OCI-LY7 (cell line): ENCODE measurements at regions of chr15 and their contacts with region 1.

Region 1: DNA sequence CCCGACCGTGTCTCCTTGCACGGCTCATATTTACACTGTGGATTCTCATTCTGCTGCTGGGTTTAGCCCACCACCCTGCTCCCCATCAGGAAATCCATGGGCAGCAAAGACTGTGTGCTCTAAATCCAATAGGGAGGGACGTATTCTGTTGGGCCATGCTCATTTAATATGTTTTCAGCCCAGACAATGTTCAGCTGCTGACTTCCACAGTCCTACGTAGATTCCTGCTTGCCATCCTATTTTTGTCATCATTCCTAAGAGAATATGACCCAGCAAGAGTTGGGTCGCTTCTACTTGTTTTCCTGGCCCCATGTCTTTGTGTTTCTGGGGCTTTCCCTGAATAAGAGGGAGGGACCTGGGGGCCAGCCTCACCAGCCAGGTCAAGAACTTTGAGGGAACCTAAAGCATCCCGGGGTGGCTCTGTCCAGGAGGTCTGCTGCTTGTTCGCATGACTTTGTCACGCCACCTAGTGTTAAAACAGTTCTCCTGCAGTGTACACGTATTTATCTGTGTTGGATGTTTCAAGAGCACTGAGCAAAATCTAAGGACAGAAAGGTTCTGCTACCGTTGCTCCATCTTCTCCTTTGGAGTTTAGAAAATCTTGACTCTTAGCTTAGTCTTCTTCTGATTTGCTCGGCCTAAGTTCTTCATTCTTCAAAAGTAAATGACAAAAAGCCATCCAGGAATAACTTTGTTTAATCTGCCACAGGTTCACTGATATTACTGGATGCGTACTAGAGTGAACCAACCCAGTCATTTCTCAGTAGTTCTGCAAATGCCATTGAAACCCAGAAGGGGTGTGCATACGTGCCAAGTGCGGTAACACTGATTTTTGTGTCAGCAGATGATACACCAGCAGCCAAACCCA is 79.8 kb upstream of the NR2E3 start:
- DNase-seq: peak; percentile 61
- H3K4me3 ChIP-seq: no peak overlapping the region
- H3K27ac ChIP-seq: no peak overlapping the region
- H3K4me1 ChIP-seq: no peaks in the 10 kb centered on the region
- CTCF ChIP-seq: peak; percentile 87

Region 2: GRCh38 chr15:71651750-71652186 is 78.7 kb before region 1 on chr15:
- CTCF ChIA-PET with region 1: no interaction called
- POLR2A ChIA-PET with region 1: no interaction called
- intact Hi-C with region 1: loop called (anchors 1 kb)
- DNase-seq: peak; percentile 45
- H3K4me3 ChIP-seq: no peak overlapping the region
- H3K27ac ChIP-seq: no peak overlapping the region
- H3K4me1 ChIP-seq: no peaks in the 10 kb centered on the region
- CTCF ChIP-seq: peak; percentile 78

Region 3: DNA sequence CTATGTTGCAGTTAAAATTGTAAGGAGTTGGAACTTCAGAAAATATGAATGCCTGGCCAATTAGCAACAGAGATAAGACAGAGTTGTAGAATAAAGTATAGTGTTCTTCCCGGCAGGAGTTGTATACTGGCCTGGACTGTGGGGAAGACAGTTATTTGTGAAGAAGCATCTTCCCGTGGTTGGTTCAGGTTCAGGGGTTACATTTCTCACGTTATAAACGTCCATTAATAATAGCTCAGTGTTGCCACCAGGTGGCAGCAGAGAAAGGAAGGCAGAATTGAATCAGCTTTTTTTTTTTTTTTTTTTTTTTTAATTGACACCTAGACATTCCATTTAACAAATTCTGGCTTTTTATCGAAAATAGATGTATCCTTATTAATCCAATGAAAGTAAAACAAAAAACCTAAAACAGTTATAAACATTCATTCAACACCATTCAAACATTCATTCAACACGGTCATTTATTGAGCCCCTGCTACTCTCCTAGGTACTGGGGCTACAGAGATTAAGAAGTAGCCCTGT is 13.4 kb after region 1 on chr15:
- CTCF ChIA-PET with region 1: no interaction called
- POLR2A ChIA-PET with region 1: no interaction called
- intact Hi-C with region 1: no loop called
- DNase-seq: peak; percentile 71
- H3K4me3 ChIP-seq: no peak overlapping the region
- H3K27ac ChIP-seq: no peak overlapping the region
- H3K4me1 ChIP-seq: no peaks in the 10 kb centered on the region
- CTCF ChIP-seq: peak; percentile 88